Right lobe of liver (tissue), 6 donors: ENCODE measurements at regions of chr16 and their contacts with region 1.

Region 1: GRCh38 chr16:81457326-81458133 is 12.9 kb downstream of the CMIP start:
- DNase-seq: peak; percentile 75 to 77 (median 76)
- ATAC-seq: peak; percentile 56 to 69 (median 67)
- H3K4me3 ChIP-seq: peak overlapping the region in 2 of 3 donors; percentile 44 to 59
- H3K27ac ChIP-seq: peak overlapping the region; percentile 80 to 83 (median 80)
- H3K4me1 ChIP-seq: peaks cover 0 to 61% (median 32%) of the 10 kb centered on the region in 4 donors
- H3K27me3 ChIP-seq: no peaks in the 10 kb centered on the region
- CTCF ChIP-seq: no peak
- POLR2A ChIP-seq: no peak

Region 2: DNA sequence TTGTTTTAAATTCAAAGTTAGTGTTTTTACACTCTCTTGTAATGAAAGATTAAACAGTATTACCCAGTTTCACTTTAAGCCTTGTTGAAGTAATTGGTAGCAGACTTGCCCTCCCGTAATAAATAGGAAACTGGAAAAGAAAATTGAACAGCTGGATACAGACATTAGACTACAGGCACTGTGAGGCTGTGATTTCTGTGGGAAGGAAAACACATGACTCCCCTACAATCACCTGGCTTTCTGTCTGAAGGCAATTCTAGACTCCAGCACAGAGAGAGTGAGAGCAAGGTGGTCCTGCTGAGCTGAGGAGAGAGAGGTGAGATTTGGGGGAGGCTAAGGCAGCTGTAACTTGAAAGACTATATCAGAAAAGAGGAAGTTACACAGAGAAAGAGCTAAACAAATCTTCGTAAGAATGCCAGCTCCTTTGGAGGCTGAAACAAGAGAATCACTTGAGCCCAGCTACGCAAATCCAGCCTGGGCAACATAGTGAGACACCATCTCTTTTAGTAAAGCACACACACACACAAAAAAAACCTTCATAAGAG is 595.3 kb before region 1 on chr16:
- intact Hi-C with region 1: no loop called
- DNase-seq: no peak
- ATAC-seq: no peak
- H3K4me3 ChIP-seq: no peak overlapping the region
- H3K27ac ChIP-seq: no peak overlapping the region
- H3K4me1 ChIP-seq: no peaks in the 10 kb centered on the region
- H3K27me3 ChIP-seq: no peaks in the 10 kb centered on the region
- CTCF ChIP-seq: no peak
- POLR2A ChIP-seq: no peak

Region 3: DNA sequence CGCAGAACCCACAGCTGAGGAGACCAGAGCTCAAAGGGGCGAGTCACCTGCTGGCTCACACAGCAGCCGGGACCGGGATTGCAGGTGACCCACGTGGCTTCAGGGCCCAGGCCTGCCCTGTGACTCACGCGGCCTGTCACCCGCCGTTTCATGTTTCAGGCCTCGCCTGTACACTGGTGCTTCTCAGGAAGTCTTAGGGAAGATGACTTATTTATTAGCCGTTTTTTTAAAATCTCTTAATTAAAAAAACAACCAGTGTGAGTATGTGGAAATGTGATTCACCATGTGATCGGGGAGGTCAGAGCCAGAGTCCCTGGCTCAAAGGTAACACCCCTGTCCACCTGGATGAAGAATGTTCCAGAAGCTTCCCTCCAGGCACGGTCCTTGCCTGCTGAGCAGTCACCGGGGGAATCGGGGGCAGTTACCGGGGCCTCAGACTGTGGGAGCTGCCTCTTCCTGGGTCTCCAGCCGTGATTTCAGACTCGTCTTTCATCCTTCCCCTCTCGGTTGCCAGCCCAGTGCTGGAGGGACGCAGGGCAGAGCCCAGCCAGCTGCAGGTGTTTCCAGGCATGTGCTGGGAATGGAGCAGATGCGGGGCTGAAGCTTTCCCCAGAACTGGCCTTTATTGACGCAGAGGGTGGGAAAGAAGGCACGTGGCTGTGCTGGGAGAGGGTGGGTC is 36.4 kb after region 1 on chr16:
- intact Hi-C with region 1: loop called in 1 of 2 experiments (anchors 5 kb)
- DNase-seq: peak; percentile 78 to 89 (median 85)
- ATAC-seq: peak; percentile 77 to 85 (median 81)
- H3K4me3 ChIP-seq: no peak overlapping the region
- H3K27ac ChIP-seq: peak overlapping the region; percentile 67 to 72 (median 70)
- H3K4me1 ChIP-seq: peaks cover 2 to 58% (median 30%) of the 10 kb centered on the region in 4 donors
- H3K27me3 ChIP-seq: no peaks in the 10 kb centered on the region
- CTCF ChIP-seq: no peak
- POLR2A ChIP-seq: no peak

Region 4: DNA sequence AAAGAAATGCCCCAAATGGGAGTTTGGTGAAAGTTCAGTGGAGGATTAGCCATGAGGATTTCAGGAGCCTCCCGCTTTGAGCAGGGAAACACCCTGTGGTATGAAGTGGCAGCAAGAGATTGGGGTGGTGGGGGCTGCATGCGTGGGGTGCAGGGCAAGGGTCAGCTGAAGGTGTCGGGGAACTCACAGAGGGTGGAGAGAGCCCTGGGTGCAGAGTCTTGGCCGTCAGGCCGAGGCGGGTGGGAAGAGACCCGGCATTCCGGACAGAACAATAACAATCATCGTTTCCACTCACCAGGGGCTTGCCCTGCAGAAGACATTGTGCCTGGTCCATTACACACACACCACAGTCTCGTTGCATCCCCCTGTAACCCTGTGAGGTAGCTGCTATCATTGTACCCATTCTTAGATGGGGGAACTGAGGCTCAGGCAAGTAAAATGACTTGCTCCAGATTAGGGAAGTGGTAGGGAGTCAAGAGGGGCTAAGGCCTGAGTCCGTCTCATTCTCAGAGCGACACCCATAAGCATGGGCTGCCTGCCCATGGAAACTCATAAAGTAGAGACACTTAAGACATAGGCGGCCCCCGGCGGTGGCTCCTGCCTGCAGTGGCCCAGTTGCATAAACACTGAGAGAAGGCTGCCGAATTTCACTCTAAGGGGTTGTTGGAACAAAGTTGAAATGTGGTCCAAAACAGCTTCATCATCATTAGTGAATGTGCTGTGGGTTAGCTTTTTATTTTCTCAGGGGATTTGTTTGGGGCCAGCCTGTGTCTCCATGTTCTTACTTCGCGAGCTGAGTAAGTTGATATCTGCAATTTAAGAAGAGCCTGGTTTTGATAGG is 80.4 kb after region 1 on chr16:
- intact Hi-C with region 1: loop called in 1 of 2 experiments (anchors 10 kb)
- DNase-seq: no peak
- ATAC-seq: no peak
- H3K4me3 ChIP-seq: no peak overlapping the region
- H3K27ac ChIP-seq: no peak overlapping the region
- H3K4me1 ChIP-seq: peaks cover 0 to 43% (median 15%) of the 10 kb centered on the region in 4 donors
- H3K27me3 ChIP-seq: no peaks in the 10 kb centered on the region
- CTCF ChIP-seq: no peak
- POLR2A ChIP-seq: no peak